Naive thymus-derived CD4-positive, alpha-beta T cell (primary cell): ENCODE measurements at regions of chr16 and their contacts with region 1.

Region 1: DNA sequence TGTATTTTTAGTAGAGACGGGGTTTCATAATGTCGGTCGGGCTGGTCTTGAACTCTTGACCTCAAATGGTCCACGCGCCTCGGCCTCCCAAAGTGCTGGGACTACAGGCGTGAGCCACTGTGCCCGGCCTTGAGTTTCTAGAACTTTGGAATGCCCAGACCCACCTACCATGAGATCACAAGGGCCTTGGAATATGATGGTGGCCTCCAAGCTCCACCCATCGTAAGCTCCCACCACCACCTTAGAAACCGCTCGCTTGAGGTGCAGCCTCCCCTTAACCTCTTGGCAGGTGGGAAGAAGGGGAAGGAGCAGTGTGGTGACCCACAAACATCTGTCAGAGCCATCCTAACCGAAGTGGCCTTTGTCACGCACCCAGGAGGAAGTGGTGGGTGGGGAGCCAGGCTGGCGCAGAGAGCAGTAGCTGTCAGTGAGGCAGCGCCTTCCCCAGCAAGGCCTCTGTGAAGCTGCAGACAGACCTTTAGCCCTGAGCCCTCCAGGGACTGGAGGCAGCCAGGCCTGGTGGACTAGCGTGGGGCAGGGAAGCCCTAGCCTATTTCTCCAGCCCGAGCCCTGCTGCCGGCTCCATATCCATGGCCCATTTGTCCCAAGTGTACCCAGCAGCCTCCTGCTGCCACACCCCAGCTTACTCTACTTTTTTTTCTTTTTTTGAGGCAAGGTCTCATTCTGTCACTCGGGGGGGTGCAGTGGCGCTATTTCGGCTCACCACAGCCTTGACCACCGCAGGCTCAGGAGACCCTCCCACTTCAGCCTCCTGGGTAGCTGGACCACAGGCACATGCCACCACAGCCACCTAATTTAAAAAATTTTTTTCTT is 13.1 kb upstream of the SEPHS2 start:
- DNase-seq: peak; percentile 41 to 90 (median 58)
- ATAC-seq: peak; percentile 96
- H3K4me3 ChIP-seq: peak overlapping the region; percentile 31
- H3K4me3 Mint-ChIP-seq: peak overlapping the region; percentile 57 to 81 (median 72)
- H3K27ac ChIP-seq: peak overlapping the region; percentile 57
- H3K27ac Mint-ChIP-seq: peak overlapping the region; percentile 64 to 96 (median 86)
- H3K4me1 ChIP-seq: peaks cover 25% of the 10 kb centered on the region in 2 donors
- H3K4me1 Mint-ChIP-seq: peaks cover 34 to 71% (median 47%) of the 10 kb centered on the region in 7 donors
- H3K27me3 ChIP-seq: no peaks in the 10 kb centered on the region
- H3K27me3 Mint-ChIP-seq: peaks cover 0 to 2% (median 0%) of the 10 kb centered on the region in 5 donors

Region 2: GRCh38 chr16:30445408-30446202 is 13.2 kb before region 1 on chr16 and contains the start of gene SEPHS2:
- CTCF ChIA-PET with region 1: interaction called, 6 read pairs
- POLR2A ChIA-PET with region 1: interaction called, 39 read pairs
- intact Hi-C with region 1: loop called (anchors 1 kb)
- DNase-seq: peak; percentile 84 to 96 (median 94)
- ATAC-seq: peak; percentile 96
- H3K4me3 ChIP-seq: peak within 1 kb of the TSS; percentile 97
- H3K4me3 Mint-ChIP-seq: peak within 1 kb of the TSS; percentile 85 to 97 (median 95)
- H3K27ac ChIP-seq: peak within 1 kb of the TSS; percentile 92
- H3K27ac Mint-ChIP-seq: peak within 1 kb of the TSS; percentile 90 to 98 (median 96)
- H3K4me1 ChIP-seq: peaks cover 26 to 37% of the 10 kb centered on the region in 2 donors
- H3K4me1 Mint-ChIP-seq: peaks cover 30 to 47% (median 41%) of the 10 kb centered on the region in 7 donors
- H3K27me3 ChIP-seq: no peaks in the 10 kb centered on the region
- H3K27me3 Mint-ChIP-seq: no peaks in the 10 kb centered on the region
- total RNA-seq, gene SEPHS2: 20.9 to 69.6 (median 47.1) TPM

Region 3: GRCh38 chr16:30472328-30472942 is 13.7 kb after region 1 on chr16 and contains the start of gene ITGAL:
- CTCF ChIA-PET with region 1: interaction called, 17 read pairs
- POLR2A ChIA-PET with region 1: interaction called, 374 read pairs
- intact Hi-C with region 1: loop called (anchors 1 kb)
- DNase-seq: peak; percentile 41 to 89 (median 84)
- ATAC-seq: peak; percentile 89
- H3K4me3 ChIP-seq: peak within 1 kb of the TSS; percentile 74
- H3K4me3 Mint-ChIP-seq: peak within 1 kb of the TSS; percentile 83 to 100 (median 98)
- H3K27ac ChIP-seq: peak within 1 kb of the TSS; percentile 84
- H3K27ac Mint-ChIP-seq: peak within 1 kb of the TSS; percentile 88 to 98 (median 96)
- H3K4me1 ChIP-seq: peaks cover 60 to 63% of the 10 kb centered on the region in 2 donors
- H3K4me1 Mint-ChIP-seq: peaks cover 43 to 83% (median 57%) of the 10 kb centered on the region in 7 donors
- H3K27me3 ChIP-seq: no peaks in the 10 kb centered on the region
- H3K27me3 Mint-ChIP-seq: no peaks in the 10 kb centered on the region
- total RNA-seq, gene ITGAL: 258 to 629 (median 436) TPM

Region 4: GRCh38 chr16:30482366-30482765 is 23.6 kb after region 1 on chr16:
- CTCF ChIA-PET with region 1: interaction called, 3 read pairs
- POLR2A ChIA-PET with region 1: interaction called, 374 read pairs
- intact Hi-C with region 1: no loop called
- DNase-seq: peak in 2 of 9 donors; percentile 18 to 21
- ATAC-seq: peak; percentile 42
- H3K4me3 ChIP-seq: no peak overlapping the region
- H3K4me3 Mint-ChIP-seq: peak overlapping the region in 7 of 10 donors; percentile 2 to 64 (median 10)
- H3K27ac ChIP-seq: peak overlapping the region; percentile 0
- H3K27ac Mint-ChIP-seq: peak overlapping the region; percentile 57 to 99 (median 86)
- H3K4me1 ChIP-seq: peaks cover 7 to 36% of the 10 kb centered on the region in 2 donors
- H3K4me1 Mint-ChIP-seq: peaks cover 35 to 65% (median 48%) of the 10 kb centered on the region in 7 donors
- H3K27me3 ChIP-seq: no peaks in the 10 kb centered on the region
- H3K27me3 Mint-ChIP-seq: no peaks in the 10 kb centered on the region

Region 5: DNA sequence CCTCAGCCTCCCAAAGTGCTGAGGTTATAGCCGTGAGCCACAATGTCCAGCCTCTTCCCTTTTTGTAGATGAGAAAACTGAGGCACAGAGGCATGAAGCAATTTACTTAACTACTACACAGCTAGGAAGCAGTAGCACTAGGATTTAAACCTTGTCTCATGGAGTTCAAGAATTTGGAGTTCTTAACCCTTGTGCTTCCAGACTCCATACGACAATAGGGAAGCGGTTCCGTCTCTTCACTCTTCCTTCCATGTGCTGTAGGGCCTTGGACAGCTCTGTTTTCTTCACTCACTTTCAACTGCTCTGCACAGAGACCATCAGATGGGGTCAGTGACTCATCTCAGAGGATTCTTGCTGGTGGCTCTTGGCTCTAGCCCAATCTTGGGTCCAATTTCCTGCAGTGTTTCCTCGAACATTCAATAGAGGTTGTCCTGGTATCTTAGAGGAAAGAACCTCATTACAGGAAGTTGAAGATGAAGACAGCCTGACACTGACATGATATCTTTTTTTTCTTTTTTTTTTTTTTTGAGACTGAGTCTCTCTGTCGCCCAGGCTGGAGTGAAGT is 33.0 kb after region 1 on chr16:
- CTCF ChIA-PET with region 1: no interaction called
- POLR2A ChIA-PET with region 1: interaction called, 10 read pairs
- intact Hi-C with region 1: no loop called
- DNase-seq: peak in 4 of 9 donors; percentile 12 to 22 (median 16)
- ATAC-seq: no peak
- H3K4me3 ChIP-seq: no peak overlapping the region
- H3K4me3 Mint-ChIP-seq: peak overlapping the region in 4 of 10 donors; percentile 26 to 62 (median 35)
- H3K27ac ChIP-seq: peak overlapping the region; percentile 34
- H3K27ac Mint-ChIP-seq: peak overlapping the region; percentile 58 to 92 (median 77)
- H3K4me1 ChIP-seq: peaks cover 0 to 7% of the 10 kb centered on the region in 2 donors
- H3K4me1 Mint-ChIP-seq: peaks cover 16 to 43% (median 21%) of the 10 kb centered on the region in 7 donors
- H3K27me3 ChIP-seq: no peaks in the 10 kb centered on the region
- H3K27me3 Mint-ChIP-seq: no peaks in the 10 kb centered on the region